ENCODE measurements at regions of chr1 and their contacts with region 1.

Region 1: DNA sequence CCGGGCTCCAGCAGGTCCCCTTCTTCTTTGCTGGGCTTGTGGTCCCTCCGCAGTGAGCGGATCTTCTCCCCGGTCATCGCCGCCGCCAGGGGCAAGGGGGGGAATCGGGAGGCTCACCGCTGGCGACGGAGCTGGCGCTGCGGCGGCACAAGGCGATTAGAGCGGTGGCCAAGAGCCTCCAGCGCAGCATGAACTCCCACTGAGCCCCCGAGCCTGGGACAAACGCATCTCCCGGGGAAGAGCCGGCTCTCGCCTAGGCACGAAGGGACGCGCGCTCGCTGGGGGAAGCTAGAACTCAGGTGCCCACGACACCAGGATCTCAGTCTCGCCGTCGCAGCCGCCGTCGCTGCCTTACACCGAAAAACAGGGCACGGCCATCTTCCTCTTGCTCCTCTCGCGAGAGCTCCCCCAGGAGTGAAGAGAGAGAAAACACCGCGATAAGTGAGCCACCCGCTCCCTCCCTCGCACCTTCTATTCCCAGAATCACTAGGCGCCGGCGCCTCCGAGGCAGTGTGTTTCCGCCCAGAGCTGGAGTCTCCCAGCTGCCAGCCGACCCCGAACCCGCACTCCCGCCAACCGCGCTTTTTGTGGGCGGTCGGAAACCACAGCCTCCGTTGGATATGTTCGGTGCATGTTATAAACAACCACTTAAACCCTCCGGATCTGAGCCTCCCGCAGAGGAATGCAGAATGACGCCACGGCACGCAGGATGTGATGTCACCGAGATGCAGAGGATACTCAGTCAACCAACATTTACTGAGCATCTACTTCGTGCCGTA is at the start of gene ANKRD13C:
- DNase-seq: peak; percentile 96 to 97
- H3K4me3 ChIP-seq: peak within 1 kb of the TSS; percentile 85 to 86
- H3K27ac ChIP-seq: peak within 1 kb of the TSS; percentile 93 to 94
- H3K4me1 ChIP-seq: peaks cover 0 to 53% (median 33%) of the 10 kb centered on the region in 4 donors
- H3K27me3 ChIP-seq: no peaks in the 10 kb centered on the region
- CTCF ChIP-seq: no peak

Region 2: DNA sequence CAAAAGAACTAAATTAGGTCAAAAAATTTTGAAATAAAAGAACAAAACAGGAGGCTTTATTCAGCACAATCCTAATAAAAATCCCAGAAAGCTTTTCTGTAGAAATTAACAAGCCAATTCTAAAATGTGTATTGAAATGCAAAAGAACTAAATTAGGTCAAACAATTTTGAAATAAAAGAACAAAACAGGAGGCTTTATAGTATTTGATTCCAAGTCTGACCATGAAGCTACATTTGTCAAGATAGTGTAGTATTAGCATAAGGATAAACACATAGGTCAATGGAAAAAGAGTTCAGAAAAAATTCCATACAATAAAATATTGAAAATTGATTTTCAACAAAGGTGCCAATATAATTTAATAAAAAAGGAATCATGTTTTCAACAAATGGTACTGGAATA is 159.9 kb before region 1 on chr1:
- intact Hi-C with region 1: no loop called
- DNase-seq: no peak
- H3K4me3 ChIP-seq: no peak overlapping the region
- H3K27ac ChIP-seq: no peak overlapping the region
- H3K4me1 ChIP-seq: no peaks in the 10 kb centered on the region
- H3K27me3 ChIP-seq: no peaks in the 10 kb centered on the region
- CTCF ChIP-seq: no peak

Region 3: DNA sequence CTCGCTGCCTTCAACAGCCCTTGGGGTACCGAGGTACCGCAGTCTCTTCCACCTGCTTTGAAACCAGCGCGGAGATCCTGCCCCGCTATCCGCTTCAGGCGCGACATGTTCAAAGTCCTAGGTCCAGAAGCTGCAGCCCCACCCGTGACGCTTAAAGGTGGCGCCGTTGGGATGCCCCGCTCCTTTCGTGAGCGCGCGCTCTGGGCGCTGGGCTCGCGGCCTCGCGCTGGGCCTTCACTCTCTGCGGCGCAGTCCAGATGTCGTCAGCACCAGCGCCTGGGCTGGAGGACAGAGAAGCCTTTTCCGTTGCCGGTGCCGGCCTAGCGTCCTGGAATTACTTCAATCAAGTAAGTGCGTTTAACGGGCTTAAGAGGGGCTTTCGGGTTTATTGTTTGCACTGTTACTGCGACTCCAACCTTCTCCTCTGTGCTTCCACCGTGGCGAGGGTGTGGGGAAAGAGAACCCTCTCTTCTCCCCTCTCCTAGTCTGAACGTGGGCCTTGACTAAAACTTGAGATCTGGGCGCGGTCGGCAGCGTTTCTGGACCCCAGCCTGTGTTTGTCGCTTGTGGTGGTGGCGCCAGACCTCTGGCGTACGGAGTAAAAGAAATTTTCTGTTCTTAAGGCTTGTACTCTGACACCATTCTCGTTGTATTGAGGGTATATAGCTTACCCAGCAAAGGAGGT is 148.9 kb before region 1 on chr1 and contains the start of gene LRRC40:
- intact Hi-C with region 1: loop called (anchors 10 kb)
- DNase-seq: peak; percentile 94 to 96
- H3K4me3 ChIP-seq: peak within 1 kb of the TSS; percentile 77 to 80
- H3K27ac ChIP-seq: peak within 1 kb of the TSS; percentile 85 to 92
- H3K4me1 ChIP-seq: peaks cover 0 to 62% (median 29%) of the 10 kb centered on the region in 4 donors
- H3K27me3 ChIP-seq: no peaks in the 10 kb centered on the region
- CTCF ChIP-seq: no peak

Region 4: DNA sequence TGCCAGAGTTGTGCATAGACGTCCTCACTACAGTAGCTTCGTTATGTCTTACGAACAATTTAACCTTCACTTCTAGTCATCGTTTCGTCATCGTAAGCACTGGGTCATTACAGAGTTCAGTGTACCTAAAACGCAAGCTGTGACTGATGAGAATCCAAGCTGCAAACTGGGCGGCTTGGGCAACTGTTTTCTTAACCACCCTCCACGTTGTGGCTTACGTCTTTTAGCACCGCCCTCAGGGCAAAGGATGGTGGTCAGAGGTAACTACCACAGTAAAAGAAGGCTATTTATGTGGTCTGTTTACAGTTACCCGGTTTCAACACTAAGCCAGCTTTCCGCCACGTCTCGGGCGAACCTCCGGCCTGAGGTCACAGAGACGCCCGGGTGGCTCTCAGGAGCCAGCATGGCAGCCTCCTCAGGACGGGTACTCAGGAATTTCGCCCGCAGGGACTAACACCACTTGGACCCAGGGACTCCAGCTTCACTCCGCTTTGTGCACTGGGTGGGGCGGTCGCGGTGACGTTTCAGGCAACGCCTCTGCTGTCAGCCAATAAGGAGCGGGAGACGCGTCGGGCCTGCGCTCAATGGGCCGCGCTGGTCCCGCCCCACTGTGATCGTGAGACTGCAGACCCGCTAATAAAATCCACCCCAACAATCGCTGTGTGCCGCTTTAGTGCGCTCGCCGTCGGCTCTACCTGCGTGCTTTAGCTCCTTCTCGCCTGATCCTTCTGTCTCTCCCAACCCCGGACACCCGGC is 56.3 kb after region 1 on chr1 and contains the start of gene CTH:
- intact Hi-C with region 1: loop called (anchors 1 kb)
- DNase-seq: peak; percentile 97 to 99
- H3K4me3 ChIP-seq: peak within 1 kb of the TSS; percentile 66 to 75
- H3K27ac ChIP-seq: peak within 1 kb of the TSS; percentile 91 to 97
- H3K4me1 ChIP-seq: peaks cover 0 to 22% (median 12%) of the 10 kb centered on the region in 4 donors
- H3K27me3 ChIP-seq: no peaks in the 10 kb centered on the region
- CTCF ChIP-seq: no peak

Measured in tibial artery (tissue), 4 donors.